ENCODE measurements at regions of chr12 and their contacts with region 1.

Region 1: DNA sequence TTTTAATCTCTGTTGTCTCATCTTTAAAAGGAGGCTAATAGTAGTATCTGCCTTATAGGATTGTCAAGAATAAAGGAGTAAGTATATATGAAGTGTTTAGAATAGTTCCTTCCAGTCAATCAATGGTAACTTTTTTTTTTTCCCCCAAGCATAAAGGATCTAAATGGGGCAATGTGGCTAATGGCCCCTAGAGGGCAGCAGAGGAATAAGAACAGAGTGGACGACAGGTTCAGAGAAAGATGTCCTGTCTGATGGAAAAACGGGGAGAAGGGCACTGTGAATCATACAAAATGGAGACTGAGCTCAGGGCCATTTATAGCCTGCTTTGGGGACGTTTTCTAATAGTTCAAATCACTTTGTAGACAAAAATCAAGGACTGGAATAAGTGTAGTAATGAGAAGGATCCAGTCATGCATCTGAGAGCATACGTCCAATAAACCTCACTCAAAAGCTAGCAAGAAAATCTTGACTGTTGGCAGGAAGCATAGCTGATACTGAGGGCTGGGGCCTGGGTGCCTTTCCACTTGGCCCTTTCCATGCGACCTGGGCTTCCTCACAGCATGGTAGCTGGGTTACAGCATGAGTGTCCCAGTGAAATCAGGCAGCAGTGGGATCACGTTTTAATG is 51.3 kb downstream of the IFNG-AS1 start:
- DNase-seq: peak; percentile 82
- ATAC-seq: peak; percentile 78
- H3K4me3 Mint-ChIP-seq: no peak overlapping the region
- H3K27ac Mint-ChIP-seq: peak overlapping the region; percentile 63
- H3K4me1 Mint-ChIP-seq: peaks cover 51% of the 10 kb centered on the region
- H3K27me3 Mint-ChIP-seq: no peaks in the 10 kb centered on the region

Region 2: GRCh38 chr12:67981287-67982162 is 59.0 kb before region 1 on chr12:
- CTCF ChIA-PET with region 1: no interaction called
- DNase-seq: no peak
- ATAC-seq: no peak
- H3K4me3 Mint-ChIP-seq: no peak overlapping the region
- H3K27ac Mint-ChIP-seq: no peak overlapping the region
- H3K4me1 Mint-ChIP-seq: no peaks in the 10 kb centered on the region
- H3K27me3 Mint-ChIP-seq: no peaks in the 10 kb centered on the region

Region 3: DNA sequence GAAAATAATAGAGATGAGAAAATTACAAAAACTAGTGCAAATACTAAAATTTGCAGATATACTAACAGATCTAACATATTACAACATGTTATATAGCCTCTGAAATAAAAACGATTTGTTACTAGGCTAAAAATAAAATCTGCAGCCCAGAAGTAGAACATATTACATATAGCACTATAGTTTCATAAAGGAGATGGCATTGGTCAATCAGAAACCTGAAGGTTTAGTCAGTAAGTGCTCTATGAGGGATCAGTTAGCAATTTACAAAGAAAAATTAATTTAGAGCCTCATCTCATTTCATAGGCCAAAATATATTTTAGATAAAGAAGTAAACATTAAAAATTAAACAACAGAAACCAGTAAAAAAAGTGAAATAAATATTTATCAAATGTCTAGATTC is 10.3 kb before region 1 on chr12:
- CTCF ChIA-PET with region 1: interaction called, 10 read pairs
- DNase-seq: no peak
- ATAC-seq: no peak
- H3K4me3 Mint-ChIP-seq: no peak overlapping the region
- H3K27ac Mint-ChIP-seq: no peak overlapping the region
- H3K4me1 Mint-ChIP-seq: peaks cover 52% of the 10 kb centered on the region
- H3K27me3 Mint-ChIP-seq: no peaks in the 10 kb centered on the region

Region 4: DNA sequence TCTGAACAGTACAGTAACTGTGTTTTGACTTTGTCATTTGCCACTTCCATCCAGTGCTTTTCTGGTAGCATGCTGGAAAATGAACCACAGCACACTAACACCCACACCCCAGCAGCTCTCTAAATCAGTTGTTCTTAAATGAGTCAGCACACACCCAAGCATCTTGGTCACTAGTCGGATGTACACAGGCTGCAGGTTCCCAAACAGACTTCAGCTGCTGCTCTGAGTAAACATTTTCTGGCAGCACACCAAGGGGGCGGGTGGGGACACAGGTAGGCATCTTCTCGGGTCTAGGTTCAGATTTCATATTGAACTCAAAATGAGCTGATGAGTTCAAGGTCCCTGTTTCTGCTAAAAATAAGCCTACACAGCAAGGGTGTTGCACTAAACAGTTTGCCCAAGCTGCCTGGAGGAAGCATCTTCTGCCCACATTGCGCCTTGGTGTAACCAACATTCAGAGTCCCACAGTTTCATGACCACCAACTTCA is 79.2 kb after region 1 on chr12:
- CTCF ChIA-PET with region 1: interaction called, 37 read pairs
- DNase-seq: peak; percentile 92
- ATAC-seq: peak; percentile 86
- H3K4me3 Mint-ChIP-seq: peak overlapping the region; percentile 54
- H3K27ac Mint-ChIP-seq: no peak overlapping the region
- H3K4me1 Mint-ChIP-seq: peaks cover 35% of the 10 kb centered on the region
- H3K27me3 Mint-ChIP-seq: no peaks in the 10 kb centered on the region

Region 5: DNA sequence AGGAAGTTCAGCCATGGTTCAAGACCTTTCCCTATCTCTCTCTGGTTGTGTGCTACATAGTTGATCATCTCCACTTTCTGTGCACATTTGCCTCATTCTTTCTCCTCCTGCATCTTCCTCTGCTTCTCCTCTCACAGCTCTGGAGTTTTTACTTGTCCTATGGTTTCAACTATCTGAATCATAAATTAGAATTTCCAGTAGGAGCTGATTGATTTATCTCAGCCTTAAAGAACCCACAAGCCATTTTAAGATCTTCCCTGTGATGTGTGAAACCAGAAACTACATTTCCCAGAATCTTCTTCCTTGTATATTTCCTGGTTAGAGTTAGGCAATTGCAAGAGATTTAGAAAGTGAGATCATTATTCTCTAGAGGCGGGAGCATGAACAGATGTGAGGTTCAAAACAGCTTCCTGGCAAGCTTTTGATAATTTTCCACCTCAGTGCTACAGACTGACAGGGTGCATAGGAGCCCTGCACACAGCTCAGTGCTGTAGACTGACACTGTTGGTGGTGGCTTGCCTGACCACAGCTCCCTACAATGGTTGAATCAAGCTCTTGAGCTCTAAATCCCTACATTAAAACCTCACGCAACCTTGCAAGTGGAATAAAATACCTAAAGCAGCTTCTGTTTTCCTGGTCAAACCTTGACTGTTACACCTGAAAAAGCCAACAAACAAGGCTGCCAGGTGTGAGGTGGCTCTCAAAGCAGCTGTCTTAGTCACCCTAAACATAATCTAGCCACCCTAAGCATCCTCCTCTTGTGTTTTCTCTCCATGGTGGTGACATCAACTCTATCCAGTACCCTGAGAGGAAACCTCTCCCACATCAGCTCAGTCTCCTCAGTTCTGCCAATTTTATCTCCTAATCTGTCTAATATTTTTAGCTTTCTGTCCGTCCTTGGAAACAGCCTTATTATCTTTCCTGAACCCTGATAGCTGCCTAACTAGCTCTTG is 140.5 kb after region 1 on chr12:
- CTCF ChIA-PET with region 1: interaction called, 14 read pairs
- DNase-seq: peak; percentile 80
- ATAC-seq: peak; percentile 91
- H3K4me3 Mint-ChIP-seq: peak overlapping the region; percentile 12
- H3K27ac Mint-ChIP-seq: peak overlapping the region; percentile 79
- H3K4me1 Mint-ChIP-seq: peaks cover 55% of the 10 kb centered on the region
- H3K27me3 Mint-ChIP-seq: peaks cover 5% of the 10 kb centered on the region

Region 6: GRCh38 chr12:68317047-68317667 is 276.6 kb after region 1 on chr12:
- CTCF ChIA-PET with region 1: interaction called, 26 read pairs
- DNase-seq: peak; percentile 58
- ATAC-seq: no peak
- H3K4me3 Mint-ChIP-seq: no peak overlapping the region
- H3K27ac Mint-ChIP-seq: no peak overlapping the region
- H3K4me1 Mint-ChIP-seq: no peaks in the 10 kb centered on the region
- H3K27me3 Mint-ChIP-seq: no peaks in the 10 kb centered on the region

Measured in activated CD8-positive, alpha-beta memory T cell treated with anti-CD3 and anti-CD28 coated beads, Interleukin-2, amount 10 ng/mL, durations not matched to agents 7 days and 5 days (primary cell).